Activated CD8-positive, alpha-beta T cell treated with anti-CD3 and anti-CD28 coated beads for 36 hours (primary cell): ENCODE measurements at regions of chr1 and their contacts with region 1.

Region 1: GRCh38 chr1:26138974-26139558 is 19.8 kb upstream of the FAM110D start:
- DNase-seq: no peak
- ATAC-seq: peak; percentile 55
- H3K4me3 Mint-ChIP-seq: no peak overlapping the region
- H3K27ac Mint-ChIP-seq: no peak overlapping the region
- H3K4me1 Mint-ChIP-seq: peaks cover 13% of the 10 kb centered on the region
- H3K27me3 Mint-ChIP-seq: no peaks in the 10 kb centered on the region
- CTCF ChIP-seq: no peak

Region 2: DNA sequence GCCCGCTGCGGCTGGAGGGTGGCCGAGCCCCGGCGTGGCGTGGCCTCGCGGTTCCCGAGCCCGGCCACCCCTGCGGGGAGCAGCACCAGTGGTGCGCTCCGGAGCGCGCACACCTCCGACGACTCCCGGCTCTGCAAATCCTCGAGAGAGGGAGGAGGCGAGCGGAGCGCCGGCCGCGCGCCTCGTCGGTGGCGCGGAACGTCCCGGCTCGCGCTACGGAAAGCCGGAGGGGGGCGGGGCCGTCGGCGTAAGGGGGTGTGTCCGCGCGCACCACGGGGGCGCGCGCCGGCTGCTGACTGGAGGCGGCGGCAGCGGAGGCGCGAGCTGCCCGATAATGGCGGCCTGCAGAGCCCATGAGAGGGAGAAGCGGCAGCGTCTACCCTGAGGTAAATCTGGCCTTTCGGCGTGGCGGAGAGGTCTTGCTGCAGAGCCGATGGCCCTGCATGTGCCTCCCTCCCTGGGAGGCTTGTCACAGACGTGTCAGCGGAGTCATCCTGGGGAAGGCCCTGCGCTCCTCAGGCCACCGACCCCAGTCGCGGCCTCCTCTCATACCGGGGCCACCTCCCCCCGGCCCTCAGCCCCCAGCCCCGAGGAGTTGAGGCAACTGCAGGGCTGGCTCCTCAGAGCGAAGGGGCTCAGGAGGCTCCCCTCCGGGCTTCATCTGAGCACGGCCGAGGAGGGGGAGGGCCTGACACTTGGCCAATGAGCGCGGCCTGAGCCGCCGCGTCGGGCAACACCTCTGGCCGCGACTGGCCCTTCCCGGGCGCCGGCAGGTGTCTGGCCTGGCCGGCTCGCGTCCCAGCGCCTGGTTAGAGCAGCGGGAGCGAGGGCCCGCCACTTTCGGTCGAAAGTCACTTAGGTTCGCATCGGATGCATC is 27.3 kb before region 1 on chr1 and contains the start of gene PDIK1L:
- CTCF ChIA-PET with region 1: interaction called, 38 read pairs
- POLR2A ChIA-PET with region 1: interaction called, 5 read pairs
- intact Hi-C with region 1: no loop called
- DNase-seq: peak; percentile 93
- ATAC-seq: peak; percentile 89
- H3K4me3 Mint-ChIP-seq: peak within 1 kb of the TSS; percentile 96
- H3K27ac Mint-ChIP-seq: peak within 1 kb of the TSS; percentile 88
- H3K4me1 Mint-ChIP-seq: peaks cover 22% of the 10 kb centered on the region
- H3K27me3 Mint-ChIP-seq: no peaks in the 10 kb centered on the region
- CTCF ChIP-seq: no peak
- total RNA-seq, gene PDIK1L: 11.7 to 13.4 TPM

Region 3: DNA sequence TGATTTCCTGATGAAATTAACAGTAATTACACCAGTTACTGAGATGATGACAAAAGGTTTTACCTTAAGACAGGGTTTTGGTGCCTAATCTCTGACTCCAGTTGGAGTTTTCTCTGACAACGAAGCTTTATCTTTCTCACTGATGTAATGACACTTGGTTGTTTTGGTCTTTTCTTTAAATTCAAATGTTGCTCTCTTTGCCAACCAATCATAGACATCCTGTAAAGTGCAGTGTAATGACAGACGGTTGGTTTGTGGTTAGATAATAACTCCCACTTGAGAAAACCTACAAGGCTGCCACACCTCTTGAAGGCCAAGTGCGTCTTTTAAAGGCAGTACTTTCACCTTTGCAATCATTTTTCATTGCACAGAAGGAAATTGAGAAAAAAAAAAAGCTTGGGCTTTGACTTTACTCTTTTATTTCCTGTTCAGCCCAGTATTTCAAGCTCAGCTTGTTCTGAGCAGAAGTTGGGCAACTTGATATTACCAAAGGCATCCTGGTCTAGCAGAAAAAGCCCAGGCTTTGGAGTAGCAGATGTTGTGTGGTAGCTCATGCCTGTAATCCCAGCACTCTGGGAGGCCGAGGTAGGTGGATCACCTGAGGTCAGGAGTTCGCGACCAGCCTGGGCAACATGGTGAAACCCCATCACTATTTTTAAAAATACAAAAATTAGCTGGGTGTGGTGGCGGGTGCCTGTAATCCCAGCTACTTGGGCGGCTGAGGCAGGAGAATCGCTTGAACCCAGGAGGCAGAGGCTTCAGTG is 12.6 kb before region 1 on chr1:
- CTCF ChIA-PET with region 1: interaction called, 164 read pairs
- POLR2A ChIA-PET with region 1: interaction called, 6 read pairs
- intact Hi-C with region 1: no loop called
- DNase-seq: peak; percentile 67
- ATAC-seq: peak; percentile 93
- H3K4me3 Mint-ChIP-seq: peak overlapping the region; percentile 71
- H3K27ac Mint-ChIP-seq: peak overlapping the region; percentile 91
- H3K4me1 Mint-ChIP-seq: peaks cover 41% of the 10 kb centered on the region
- H3K27me3 Mint-ChIP-seq: peaks cover 2% of the 10 kb centered on the region
- CTCF ChIP-seq: no peak